CD14-positive monocyte (primary cell): ENCODE measurements at regions of chr1 and their contacts with region 1.

Region 1: GRCh38 chr1:45686317-45687013 is at the start of gene GPBP1L1:
- DNase-seq: peak; percentile 95 to 98 (median 98)
- H3K4me3 ChIP-seq: peak within 1 kb of the TSS; percentile 96 to 100 (median 99)
- H3K4me3 Mint-ChIP-seq: peak within 1 kb of the TSS; percentile 90 to 100
- H3K27ac ChIP-seq: peak within 1 kb of the TSS; percentile 89 to 94
- H3K27ac Mint-ChIP-seq: peak within 1 kb of the TSS; percentile 97 to 100 (median 99)
- H3K4me1 ChIP-seq: peaks cover 36 to 56% of the 10 kb centered on the region in 2 donors
- H3K4me1 Mint-ChIP-seq: peaks cover 39% of the 10 kb centered on the region
- H3K27me3 ChIP-seq: no peaks in the 10 kb centered on the region
- H3K27me3 Mint-ChIP-seq: no peaks in the 10 kb centered on the region
- CTCF ChIP-seq: no peak
- polyA plus RNA-seq, gene GPBP1L1: 71.6 to 93.3 (median 79.5) TPM

Region 2: DNA sequence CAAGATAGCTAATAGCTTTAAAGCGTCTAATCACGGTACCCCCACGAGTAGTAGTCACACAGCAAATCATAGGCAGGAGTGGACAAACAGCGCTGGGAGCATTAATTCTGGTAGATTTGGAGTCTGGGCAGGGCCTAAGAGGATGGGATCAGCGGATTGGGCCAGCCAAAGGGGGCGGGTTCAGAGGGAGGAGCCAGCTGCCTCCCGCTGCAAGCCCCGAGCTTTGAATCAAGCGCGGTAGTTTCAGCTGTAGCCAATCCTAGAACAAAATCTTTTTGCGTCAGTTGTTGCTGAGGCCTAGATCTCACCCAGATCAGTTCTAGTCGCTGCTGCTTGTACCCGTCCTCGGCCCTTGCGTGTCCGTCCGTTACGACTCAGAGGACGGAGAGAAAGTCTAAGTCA is 103.2 kb before region 1 on chr1:
- intact Hi-C with region 1: loop called (anchors 10 kb)
- DNase-seq: peak; percentile 97 to 99 (median 97)
- H3K4me3 ChIP-seq: peak overlapping the region; percentile 74 to 99 (median 97)
- H3K4me3 Mint-ChIP-seq: peak overlapping the region; percentile 98 to 99
- H3K27ac ChIP-seq: peak overlapping the region; percentile 83 to 84
- H3K27ac Mint-ChIP-seq: peak overlapping the region; percentile 94 to 98 (median 97)
- H3K4me1 ChIP-seq: peaks cover 40 to 42% of the 10 kb centered on the region in 2 donors
- H3K4me1 Mint-ChIP-seq: peaks cover 39% of the 10 kb centered on the region
- H3K27me3 ChIP-seq: no peaks in the 10 kb centered on the region
- H3K27me3 Mint-ChIP-seq: peaks cover 0 to 2% (median 0%) of the 10 kb centered on the region in 3 donors
- CTCF ChIP-seq: no peak

Region 3: GRCh38 chr1:45640293-45640692 is 46.2 kb before region 1 on chr1:
- intact Hi-C with region 1: no loop called
- DNase-seq: no peak
- H3K4me3 ChIP-seq: no peak overlapping the region
- H3K4me3 Mint-ChIP-seq: no peak overlapping the region
- H3K27ac ChIP-seq: no peak overlapping the region
- H3K27ac Mint-ChIP-seq: peak overlapping the region in 1 of 7 donors; percentile 28
- H3K4me1 ChIP-seq: no peaks in the 10 kb centered on the region
- H3K4me1 Mint-ChIP-seq: no peaks in the 10 kb centered on the region
- H3K27me3 ChIP-seq: no peaks in the 10 kb centered on the region
- H3K27me3 Mint-ChIP-seq: no peaks in the 10 kb centered on the region
- CTCF ChIP-seq: no peak

Region 4: DNA sequence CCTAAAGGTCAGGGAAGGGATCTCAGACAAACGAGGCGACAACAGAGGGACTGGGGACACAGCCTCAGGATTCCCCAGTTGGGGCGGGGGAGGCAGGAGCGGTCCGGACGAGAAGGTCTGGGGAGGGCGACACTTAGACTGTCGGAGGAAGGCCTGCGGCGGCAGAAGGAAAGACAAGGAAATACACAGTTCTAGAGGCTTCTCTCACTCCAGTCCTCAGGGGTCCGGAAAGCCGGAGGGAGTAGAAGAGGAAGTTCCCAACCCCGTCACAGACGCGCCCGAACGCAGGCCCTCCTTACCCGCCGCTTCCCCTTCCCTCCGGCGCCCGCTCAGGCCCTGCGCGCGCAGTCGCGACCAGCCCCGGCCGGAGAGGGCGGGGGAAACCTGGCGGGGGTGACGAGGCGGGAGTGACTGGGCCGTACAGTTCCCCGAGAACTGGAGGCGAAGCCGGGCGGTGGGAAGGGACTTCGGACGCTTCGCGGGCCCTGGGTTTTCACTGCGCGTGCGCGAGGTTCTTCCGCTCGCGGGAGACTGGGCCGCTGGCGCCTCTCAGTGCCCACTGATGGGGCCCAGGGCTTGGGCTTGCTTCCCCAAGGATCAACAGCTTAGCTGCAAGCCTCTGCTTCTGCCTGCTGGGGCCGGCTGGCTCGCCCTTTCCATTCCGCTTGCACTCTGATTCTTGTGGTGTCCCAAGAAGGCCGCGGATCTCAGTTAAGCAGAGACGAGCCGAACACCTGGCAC is 64.0 kb after region 1 on chr1 and contains the start of gene IPP:
- intact Hi-C with region 1: loop called (anchors 2 kb)
- DNase-seq: peak; percentile 99 to 100 (median 99)
- H3K4me3 ChIP-seq: peak within 1 kb of the TSS; percentile 41 to 70 (median 55)
- H3K4me3 Mint-ChIP-seq: peak within 1 kb of the TSS; percentile 89 to 99
- H3K27ac ChIP-seq: peak within 1 kb of the TSS; percentile 91 to 98
- H3K27ac Mint-ChIP-seq: peak within 1 kb of the TSS; percentile 100
- H3K4me1 ChIP-seq: peaks cover 13 to 31% of the 10 kb centered on the region in 2 donors
- H3K4me1 Mint-ChIP-seq: peaks cover 21% of the 10 kb centered on the region
- H3K27me3 ChIP-seq: no peaks in the 10 kb centered on the region
- H3K27me3 Mint-ChIP-seq: no peaks in the 10 kb centered on the region
- CTCF ChIP-seq: no peak
- polyA plus RNA-seq, gene IPP: 0.35 to 1.4 (median 1.4) TPM

Region 5: DNA sequence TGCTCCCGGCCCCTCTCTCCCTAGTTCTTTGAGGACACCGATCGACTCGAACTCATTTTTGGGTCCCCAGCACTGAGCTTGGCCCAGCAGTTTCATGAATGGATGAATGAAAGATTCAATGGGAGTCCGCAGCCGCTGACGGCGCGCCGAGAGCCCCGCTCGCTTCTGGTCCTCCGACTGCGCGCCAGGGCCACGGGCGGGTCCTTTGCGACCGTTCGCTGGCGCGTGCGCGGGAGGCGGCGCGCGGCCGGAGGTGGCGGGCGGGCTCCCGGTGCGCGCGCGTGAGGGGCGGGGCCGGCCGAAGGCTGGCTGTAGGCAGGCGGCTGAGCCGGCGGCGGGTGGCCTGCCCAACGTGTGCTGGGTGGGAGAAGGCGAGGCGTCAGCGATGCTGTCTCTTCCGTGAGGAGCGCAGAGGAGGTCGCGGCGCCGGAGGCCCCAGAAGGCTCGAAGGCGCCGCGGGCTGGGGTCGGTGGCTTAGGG is 116.9 kb after region 1 on chr1 and contains the start of gene MAST2:
- intact Hi-C with region 1: loop called in 1 of 2 experiments (anchors 5 kb)
- DNase-seq: peak; percentile 78 to 82 (median 79)
- H3K4me3 ChIP-seq: peak within 1 kb of the TSS; percentile 46 to 81 (median 53)
- H3K4me3 Mint-ChIP-seq: peak within 1 kb of the TSS; percentile 90 to 97
- H3K27ac ChIP-seq: peak within 1 kb of the TSS; percentile 35 to 70
- H3K27ac Mint-ChIP-seq: peak within 1 kb of the TSS; percentile 89 to 98 (median 97)
- H3K4me1 ChIP-seq: peaks cover 23 to 32% of the 10 kb centered on the region in 2 donors
- H3K4me1 Mint-ChIP-seq: peaks cover 32% of the 10 kb centered on the region
- H3K27me3 ChIP-seq: peaks cover 0 to 2% of the 10 kb centered on the region in 2 donors
- H3K27me3 Mint-ChIP-seq: peaks cover 0 to 3% (median 0%) of the 10 kb centered on the region in 3 donors
- CTCF ChIP-seq: no peak
- polyA plus RNA-seq, gene MAST2: 1.0 to 7.2 (median 2.5) TPM